Naive thymus-derived CD4-positive, alpha-beta T cell (primary cell): ENCODE measurements at regions of chr5 and their contacts with region 1.

Region 1: DNA sequence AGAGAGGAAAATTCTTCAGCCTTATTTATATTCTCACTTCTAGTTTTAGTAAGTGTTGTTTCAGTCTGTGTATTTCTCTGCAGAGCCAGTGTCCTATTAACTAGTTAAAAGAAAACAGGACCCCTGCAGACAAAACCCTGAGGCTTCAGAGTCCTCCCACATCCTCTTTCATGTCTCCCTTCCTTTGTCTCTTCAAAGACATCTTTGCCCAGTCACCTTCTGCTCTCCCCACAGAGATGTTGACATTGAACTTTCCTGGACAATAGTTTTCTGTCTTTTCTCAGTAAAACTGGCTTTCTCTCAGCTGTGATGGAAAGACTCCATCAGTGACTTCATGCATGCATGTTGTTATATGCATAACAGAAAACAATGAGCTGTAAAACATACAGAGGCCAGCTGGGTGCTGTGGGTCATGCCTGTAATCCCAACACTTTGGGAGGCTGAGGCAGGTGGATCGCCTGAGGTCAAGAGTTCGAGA is 20.2 kb downstream of the GRAMD2B start:
- DNase-seq: no peak
- ATAC-seq: no peak
- H3K4me3 ChIP-seq: no peak overlapping the region
- H3K4me3 Mint-ChIP-seq: peak overlapping the region in 5 of 10 donors; percentile 9 to 54 (median 31)
- H3K27ac ChIP-seq: no peak overlapping the region
- H3K27ac Mint-ChIP-seq: peak overlapping the region; percentile 40 to 99 (median 77)
- H3K4me1 ChIP-seq: peaks cover 0 to 39% of the 10 kb centered on the region in 2 donors
- H3K4me1 Mint-ChIP-seq: peaks cover 18 to 58% (median 52%) of the 10 kb centered on the region in 7 donors
- H3K27me3 ChIP-seq: no peaks in the 10 kb centered on the region
- H3K27me3 Mint-ChIP-seq: no peaks in the 10 kb centered on the region

Region 2: GRCh38 chr5:126373375-126374108 is 69.9 kb before region 1 on chr5:
- CTCF ChIA-PET with region 1: no interaction called
- POLR2A ChIA-PET with region 1: no interaction called
- intact Hi-C with region 1: loop called in 1 of 2 experiments (anchors 1 kb)
- DNase-seq: peak in 7 of 9 donors; percentile 22 to 57 (median 41)
- ATAC-seq: peak; percentile 86
- H3K4me3 ChIP-seq: no peak overlapping the region
- H3K4me3 Mint-ChIP-seq: peak overlapping the region in 7 of 10 donors; percentile 1 to 52 (median 22)
- H3K27ac ChIP-seq: peak overlapping the region; percentile 32
- H3K27ac Mint-ChIP-seq: peak overlapping the region in 8 of 9 donors; percentile 8 to 91 (median 66)
- H3K4me1 ChIP-seq: peaks cover 9 to 15% of the 10 kb centered on the region in 2 donors
- H3K4me1 Mint-ChIP-seq: peaks cover 5 to 24% (median 18%) of the 10 kb centered on the region in 7 donors
- H3K27me3 ChIP-seq: no peaks in the 10 kb centered on the region
- H3K27me3 Mint-ChIP-seq: no peaks in the 10 kb centered on the region

Region 3: DNA sequence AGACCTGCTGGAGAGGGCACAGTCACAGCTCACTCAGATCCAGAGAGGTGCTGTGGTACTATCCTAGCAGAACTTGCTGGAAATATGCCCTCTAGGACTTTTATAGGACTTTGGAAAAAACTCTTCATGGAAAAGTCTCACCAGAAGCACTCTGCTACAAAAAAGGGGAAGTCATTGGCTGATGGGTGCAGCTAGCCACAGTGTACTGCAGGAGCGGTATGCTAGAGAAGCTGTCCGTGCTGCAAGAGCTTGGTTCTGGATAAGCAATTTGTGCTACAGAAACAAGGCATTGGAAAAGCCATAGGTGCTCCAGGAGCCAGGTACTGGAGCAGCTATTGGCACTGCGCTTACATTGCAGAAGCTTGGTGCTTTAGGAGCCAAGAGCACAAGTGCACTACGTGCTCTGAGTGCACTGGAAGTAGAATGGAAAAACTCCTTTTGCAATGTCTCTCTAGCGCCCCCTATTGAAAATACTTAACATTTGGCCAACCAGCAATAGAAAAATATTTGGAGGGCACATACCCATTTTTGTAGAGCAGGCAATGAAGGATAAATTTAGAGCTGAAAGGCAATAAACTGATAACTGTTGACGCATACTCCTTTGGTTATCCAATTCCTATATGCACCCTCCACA is 930.6 kb after region 1 on chr5:
- CTCF ChIA-PET with region 1: no interaction called
- POLR2A ChIA-PET with region 1: no interaction called
- intact Hi-C with region 1: no loop called
- DNase-seq: no peak
- ATAC-seq: no peak
- H3K4me3 ChIP-seq: no peak overlapping the region
- H3K4me3 Mint-ChIP-seq: no peak overlapping the region
- H3K27ac ChIP-seq: no peak overlapping the region
- H3K27ac Mint-ChIP-seq: no peak overlapping the region
- H3K4me1 ChIP-seq: no peaks in the 10 kb centered on the region
- H3K4me1 Mint-ChIP-seq: no peaks in the 10 kb centered on the region
- H3K27me3 ChIP-seq: no peaks in the 10 kb centered on the region
- H3K27me3 Mint-ChIP-seq: peaks cover 0 to 35% (median 17%) of the 10 kb centered on the region in 5 donors

Region 4: GRCh38 chr5:127746756-127747155 is 1303.3 kb after region 1 on chr5:
- CTCF ChIA-PET with region 1: no interaction called
- POLR2A ChIA-PET with region 1: no interaction called
- intact Hi-C with region 1: no loop called
- DNase-seq: peak in 2 of 9 donors; percentile 3 to 6
- ATAC-seq: no peak
- H3K4me3 ChIP-seq: no peak overlapping the region
- H3K4me3 Mint-ChIP-seq: no peak overlapping the region
- H3K27ac ChIP-seq: no peak overlapping the region
- H3K27ac Mint-ChIP-seq: no peak overlapping the region
- H3K4me1 ChIP-seq: no peaks in the 10 kb centered on the region
- H3K4me1 Mint-ChIP-seq: no peaks in the 10 kb centered on the region
- H3K27me3 ChIP-seq: no peaks in the 10 kb centered on the region
- H3K27me3 Mint-ChIP-seq: peaks cover 0 to 18% (median 10%) of the 10 kb centered on the region in 5 donors